ENCODE measurements at regions of chr19 and their contacts with region 1.

Region 1: GRCh38 chr19:55160128-55160985 is 2.8 kb upstream of the TNNI3 start:
- DNase-seq: peak; percentile 77
- ATAC-seq: peak; percentile 84
- H3K4me3 ChIP-seq: no peak overlapping the region; a peak in 1 of 4 replicates
- H3K27ac ChIP-seq: no peak overlapping the region
- H3K4me1 ChIP-seq: peaks cover 8% of the 10 kb centered on the region; the same call in 1 of the 2 replicates
- H3K27me3 ChIP-seq: no peaks in the 10 kb centered on the region
- CTCF ChIP-seq: peak; percentile 100

Region 2: GRCh38 chr19:54179921-54180461 is 980.4 kb before region 1 on chr19:
- CTCF ChIA-PET with region 1: no interaction called
- POLR2A ChIA-PET with region 1: interaction called, 11 read pairs
- in situ Hi-C with region 1: no loop called
- intact Hi-C with region 1: no loop called
- DNase-seq: no peak
- ATAC-seq: peak; percentile 72
- H3K4me3 ChIP-seq: no peak overlapping the region
- H3K27ac ChIP-seq: no peak overlapping the region
- H3K4me1 ChIP-seq: no peaks in the 10 kb centered on the region
- H3K27me3 ChIP-seq: no peaks in the 10 kb centered on the region
- CTCF ChIP-seq: no peak

Region 3: DNA sequence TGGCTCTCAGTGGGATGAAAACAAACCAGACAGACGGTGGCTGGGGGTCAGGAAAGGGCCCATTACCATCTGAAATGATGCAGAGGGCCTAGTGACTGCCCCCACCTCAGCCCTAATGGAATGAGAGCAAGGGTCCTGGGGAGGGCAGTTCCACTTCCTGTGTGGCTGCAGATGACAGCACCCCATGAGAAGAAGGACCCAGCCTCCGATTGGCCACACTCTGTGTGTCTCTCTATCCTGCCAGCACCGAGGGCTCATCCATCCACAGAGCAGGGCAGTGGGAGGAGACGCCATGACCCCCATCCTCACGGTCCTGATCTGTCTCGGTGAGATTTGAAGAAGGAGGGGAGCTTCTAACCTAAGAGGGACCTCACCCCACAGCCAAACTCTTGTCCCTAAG is 529.6 kb before region 1 on chr19:
- CTCF ChIA-PET with region 1: no interaction called
- POLR2A ChIA-PET with region 1: no interaction called
- in situ Hi-C with region 1: no loop called
- intact Hi-C with region 1: no loop called
- DNase-seq: no peak
- ATAC-seq: no peak
- H3K4me3 ChIP-seq: no peak overlapping the region
- H3K27ac ChIP-seq: no peak overlapping the region
- H3K4me1 ChIP-seq: no peaks in the 10 kb centered on the region
- H3K27me3 ChIP-seq: peaks cover 16% of the 10 kb centered on the region
- CTCF ChIP-seq: no peak

Region 4: GRCh38 chr19:55027472-55028337 is 132.7 kb before region 1 on chr19:
- CTCF ChIA-PET with region 1: no interaction called
- POLR2A ChIA-PET with region 1: interaction called, 13 read pairs
- in situ Hi-C with region 1: no loop called
- intact Hi-C with region 1: no loop called
- DNase-seq: no peak
- ATAC-seq: peak; percentile 90
- H3K4me3 ChIP-seq: peak overlapping the region; percentile 73 to 89
- H3K27ac ChIP-seq: peak overlapping the region; percentile 89
- H3K4me1 ChIP-seq: 0 out of 2 replicates have a peak, but pooled peaks cover 2% of the 10 kb centered on the region
- H3K27me3 ChIP-seq: no peaks in the 10 kb centered on the region
- CTCF ChIP-seq: no peak

Region 5: DNA sequence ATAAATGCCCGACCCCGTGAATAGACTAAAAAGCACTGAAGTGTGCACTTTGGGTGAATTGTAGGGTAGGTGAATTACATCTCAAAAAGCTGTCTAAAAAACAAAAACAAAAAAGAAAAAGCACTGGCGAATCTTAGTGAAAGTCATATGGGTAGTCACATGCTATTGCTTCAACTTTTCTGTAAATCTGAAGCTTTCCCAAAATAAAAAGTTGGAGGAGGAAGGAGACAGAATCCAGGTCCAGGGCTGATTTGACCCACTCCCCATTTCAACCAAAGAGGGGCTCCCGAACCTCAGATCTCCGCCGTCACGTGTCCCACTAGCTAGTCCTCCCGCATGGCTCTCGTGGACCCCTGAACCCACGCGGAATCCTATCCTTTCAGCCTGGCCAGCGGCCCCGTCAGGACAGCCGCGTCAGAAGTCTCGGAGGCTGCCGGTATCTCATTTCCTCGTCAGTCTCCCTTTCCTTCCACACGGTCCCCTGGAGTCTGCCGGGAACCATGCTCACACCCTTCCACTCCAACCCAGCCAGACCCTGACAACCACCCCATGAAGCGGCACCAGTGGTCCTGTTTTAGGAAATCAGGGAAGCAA is 49.0 kb before region 1 on chr19:
- CTCF ChIA-PET with region 1: no interaction called
- POLR2A ChIA-PET with region 1: no interaction called
- in situ Hi-C with region 1: no loop called
- intact Hi-C with region 1: no loop called
- DNase-seq: no peak
- ATAC-seq: no peak
- H3K4me3 ChIP-seq: no peak overlapping the region
- H3K27ac ChIP-seq: no peak overlapping the region
- H3K4me1 ChIP-seq: peaks cover 29% of the 10 kb centered on the region
- H3K27me3 ChIP-seq: no peaks in the 10 kb centered on the region
- CTCF ChIP-seq: no peak

Region 6: DNA sequence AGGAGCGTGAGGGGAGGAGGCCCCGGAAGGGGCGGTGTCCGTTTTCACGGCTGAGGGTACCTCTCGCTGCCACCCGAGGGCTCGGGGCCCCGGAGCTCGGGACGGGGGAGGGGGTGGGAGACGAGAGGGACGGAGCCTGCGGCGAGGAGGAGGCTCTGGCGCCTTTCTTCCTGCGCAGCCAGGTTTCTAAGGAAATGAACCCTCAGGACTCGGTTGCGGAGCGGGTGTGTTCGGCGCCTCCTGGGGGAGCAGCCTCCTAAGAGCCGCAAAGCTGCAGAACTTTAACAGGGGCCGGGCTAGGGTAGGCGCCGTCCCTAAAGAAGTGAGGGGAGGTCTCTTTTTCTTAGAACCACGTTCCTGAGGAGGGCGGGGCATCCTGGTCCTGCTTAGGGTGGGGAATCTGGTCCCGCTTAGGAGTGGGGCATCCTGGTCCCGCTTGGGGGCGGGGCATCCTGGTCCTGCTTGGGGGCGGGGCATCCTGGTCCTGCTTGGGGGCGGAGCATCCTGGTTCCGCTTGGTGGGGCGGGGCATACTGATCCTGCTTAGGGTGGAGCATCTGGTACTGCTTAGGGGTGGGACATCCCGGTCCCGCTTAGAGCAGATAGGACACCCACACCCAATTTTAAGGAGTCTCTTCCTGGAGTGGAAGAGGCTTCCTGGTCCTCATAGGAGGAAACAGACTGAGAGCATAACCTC is 13.5 kb after region 1 on chr19:
- CTCF ChIA-PET with region 1: interaction called, 22 read pairs
- POLR2A ChIA-PET with region 1: interaction called, 11 read pairs
- in situ Hi-C with region 1: no loop called
- intact Hi-C with region 1: no loop called
- DNase-seq: peak; percentile 54
- ATAC-seq: peak; percentile 92
- H3K4me3 ChIP-seq: peak overlapping the region; percentile 61 to 79
- H3K27ac ChIP-seq: peak overlapping the region; percentile 80
- H3K4me1 ChIP-seq: peaks cover 8% of the 10 kb centered on the region; the same call in 1 of the 2 replicates
- H3K27me3 ChIP-seq: no peaks in the 10 kb centered on the region
- CTCF ChIP-seq: no peak

Measured in Panc1 (cell line).